ENCODE measurements at regions of chr1 and their contacts with region 1.

Region 1: DNA sequence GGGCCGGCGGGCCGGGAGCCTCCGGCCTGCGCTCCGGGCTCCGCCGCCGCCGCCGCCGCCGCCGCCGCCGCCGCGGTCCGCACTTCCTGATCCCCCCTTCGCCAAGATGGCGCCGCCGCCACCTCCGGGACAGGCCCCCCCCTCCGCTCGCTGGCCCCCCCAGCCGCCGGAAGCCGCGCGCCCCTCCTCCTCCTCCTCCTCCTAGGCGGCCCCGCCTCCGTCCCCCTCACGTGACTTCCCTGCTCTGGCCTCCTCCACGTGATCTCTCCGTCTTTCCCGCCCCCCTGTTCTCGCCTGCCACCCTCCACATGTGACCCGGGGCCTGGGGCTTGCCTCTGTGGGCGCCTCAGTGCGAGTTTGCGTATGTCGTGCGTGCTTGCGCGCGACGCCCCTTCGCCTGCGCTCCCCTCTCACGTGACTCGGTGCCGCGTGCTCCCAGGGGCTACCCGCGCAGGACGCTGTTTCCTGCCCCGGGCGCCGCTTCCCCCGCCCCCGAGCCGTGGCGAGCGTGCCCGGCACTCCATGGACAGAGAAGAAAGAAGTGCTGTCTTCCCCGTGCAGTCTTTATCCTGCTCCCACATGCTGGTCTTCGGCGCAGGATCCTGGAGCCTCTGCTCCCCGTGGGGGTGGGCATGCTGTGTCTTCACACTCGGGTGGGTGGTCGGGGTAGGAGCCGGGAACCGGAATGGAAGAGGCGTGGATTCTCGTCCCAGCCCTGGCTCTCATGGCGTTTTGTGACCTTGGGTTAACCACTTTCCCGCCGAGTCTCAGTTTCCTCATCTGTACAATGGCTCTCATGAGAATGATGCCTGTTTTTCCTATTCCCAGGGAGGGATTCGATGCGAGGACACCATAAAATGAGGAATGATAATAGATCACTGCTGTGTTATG is at the start of gene UBE2Q1:
- DNase-seq: peak; percentile 99
- H3K4me3 Mint-ChIP-seq: peak within 1 kb of the TSS; percentile 76
- H3K27ac Mint-ChIP-seq: peak within 1 kb of the TSS; percentile 65
- H3K4me1 Mint-ChIP-seq: peaks cover 18% of the 10 kb centered on the region
- H3K27me3 Mint-ChIP-seq: no peaks in the 10 kb centered on the region
- CTCF ChIP-seq: no peak
- total RNA-seq, gene UBE2Q1: 103 and 111 TPM in 2 replicates

Region 2: DNA sequence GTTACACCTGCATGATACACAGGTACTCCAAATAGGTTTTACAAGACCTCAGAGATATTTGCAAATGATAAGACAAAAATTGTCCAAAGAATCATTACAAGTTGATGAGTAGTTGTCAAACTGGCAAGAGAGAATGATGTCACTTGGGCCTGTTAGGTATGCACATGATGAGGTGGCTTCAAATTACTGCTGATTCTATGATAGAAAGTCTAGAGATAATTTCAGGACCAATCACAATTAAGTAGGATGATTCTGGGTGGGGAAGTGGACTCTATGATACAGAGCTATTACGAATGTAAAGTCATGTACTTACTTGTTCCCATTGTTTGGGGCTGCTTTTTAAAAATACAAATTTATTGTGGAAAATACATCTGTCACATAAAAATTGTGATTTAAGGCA is 1533.0 kb before region 1 on chr1:
- CTCF ChIA-PET with region 1: no interaction called
- POLR2A ChIA-PET with region 1: no interaction called
- intact Hi-C with region 1: no loop called
- DNase-seq: no peak
- H3K4me3 Mint-ChIP-seq: no peak overlapping the region
- H3K27ac Mint-ChIP-seq: no peak overlapping the region
- H3K4me1 Mint-ChIP-seq: no peaks in the 10 kb centered on the region
- H3K27me3 Mint-ChIP-seq: no peaks in the 10 kb centered on the region
- CTCF ChIP-seq: no peak

Region 3: DNA sequence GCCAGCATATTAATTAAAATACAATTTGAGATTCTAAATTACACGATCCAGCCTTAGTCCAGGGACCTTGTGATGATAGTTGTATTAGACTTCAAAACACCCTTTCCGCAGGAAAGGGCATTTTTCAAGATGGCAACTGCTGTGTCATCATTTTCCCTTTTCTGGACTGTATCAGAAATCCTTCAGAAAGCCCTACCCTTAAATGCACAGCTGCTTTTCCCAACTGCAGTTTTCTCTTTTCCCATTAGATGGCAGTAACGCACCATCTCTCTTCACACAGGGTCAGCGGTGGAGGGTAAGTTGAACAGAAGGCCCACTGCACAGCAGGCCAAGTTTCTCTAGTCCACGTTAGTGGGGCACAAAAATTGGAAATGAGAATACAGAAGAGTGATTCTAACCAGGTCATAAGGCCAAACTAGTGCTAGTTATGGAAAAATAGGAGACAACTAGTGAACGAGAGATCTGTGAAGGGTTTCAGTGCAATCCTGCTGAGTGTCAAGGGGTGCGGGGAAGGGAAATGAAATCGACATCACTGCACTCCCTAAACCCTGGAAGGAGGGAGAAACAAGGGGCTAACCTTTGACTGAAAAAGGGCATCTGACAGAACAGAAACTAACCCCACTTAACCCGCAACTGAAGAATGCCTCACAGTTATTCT is 78.9 kb before region 1 on chr1:
- CTCF ChIA-PET with region 1: interaction called, 128 read pairs
- POLR2A ChIA-PET with region 1: interaction called, 4 read pairs
- intact Hi-C with region 1: no loop called
- DNase-seq: peak; percentile 92
- H3K4me3 Mint-ChIP-seq: no peak overlapping the region
- H3K27ac Mint-ChIP-seq: no peak overlapping the region
- H3K4me1 Mint-ChIP-seq: peaks cover 23% of the 10 kb centered on the region
- H3K27me3 Mint-ChIP-seq: no peaks in the 10 kb centered on the region
- CTCF ChIP-seq: peak; percentile 98

Region 4: DNA sequence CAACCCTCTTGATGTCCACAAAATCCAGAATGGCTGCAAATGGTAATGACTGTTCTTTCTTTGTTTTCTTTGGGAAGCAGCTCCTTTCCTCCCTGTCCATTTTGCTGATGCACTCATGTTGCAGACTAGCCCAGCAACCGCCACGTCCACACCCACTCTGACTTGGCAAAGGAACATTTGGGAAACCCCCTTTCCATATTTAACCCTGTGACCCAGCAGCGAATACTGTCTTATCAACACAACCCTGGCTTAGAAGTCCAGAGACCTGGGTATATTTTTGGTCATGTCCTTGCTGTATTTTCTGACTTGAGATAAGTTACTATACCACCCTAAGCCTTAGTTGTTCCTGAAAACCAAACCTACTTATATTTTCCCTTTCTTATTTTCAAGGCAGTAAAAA is 38.5 kb before region 1 on chr1:
- CTCF ChIA-PET with region 1: no interaction called
- POLR2A ChIA-PET with region 1: no interaction called
- intact Hi-C with region 1: no loop called
- DNase-seq: peak; percentile 25
- H3K4me3 Mint-ChIP-seq: no peak overlapping the region
- H3K27ac Mint-ChIP-seq: no peak overlapping the region
- H3K4me1 Mint-ChIP-seq: peaks cover 15% of the 10 kb centered on the region
- H3K27me3 Mint-ChIP-seq: peaks cover 45% of the 10 kb centered on the region
- CTCF ChIP-seq: no peak

Region 5: DNA sequence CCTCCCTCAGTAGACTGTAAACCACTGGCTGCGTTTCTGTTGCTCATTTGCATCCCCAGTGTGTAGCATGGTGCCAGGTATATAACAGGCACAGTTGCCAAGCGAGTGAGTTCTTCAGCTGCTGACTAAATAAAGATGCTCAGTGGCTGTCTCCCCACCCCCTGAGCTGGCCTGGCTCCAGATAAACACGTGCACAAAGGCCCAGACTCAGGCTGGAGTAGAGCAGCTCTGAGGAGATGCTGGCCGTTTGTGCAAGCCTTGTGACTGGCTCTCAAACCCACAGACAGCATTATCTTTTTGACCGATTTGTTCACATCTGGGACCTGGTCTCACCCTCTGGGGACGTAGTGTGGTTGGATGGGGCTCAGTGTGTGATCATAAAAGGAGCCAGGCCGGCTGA is 15.9 kb after region 1 on chr1:
- CTCF ChIA-PET with region 1: interaction called, 13 read pairs
- POLR2A ChIA-PET with region 1: interaction called, 8 read pairs
- intact Hi-C with region 1: no loop called
- DNase-seq: peak; percentile 56
- H3K4me3 Mint-ChIP-seq: no peak overlapping the region
- H3K27ac Mint-ChIP-seq: no peak overlapping the region
- H3K4me1 Mint-ChIP-seq: peaks cover 8% of the 10 kb centered on the region
- H3K27me3 Mint-ChIP-seq: peaks cover 29% of the 10 kb centered on the region
- CTCF ChIP-seq: no peak

Region 6: GRCh38 chr1:154627257-154628120 is 68.7 kb after region 1 on chr1:
- CTCF ChIA-PET with region 1: interaction called, 7 read pairs
- POLR2A ChIA-PET with region 1: interaction called, 13 read pairs
- intact Hi-C with region 1: loop called (anchors 1 kb)
- DNase-seq: peak; percentile 93
- H3K4me3 Mint-ChIP-seq: peak overlapping the region; percentile 84
- H3K27ac Mint-ChIP-seq: peak overlapping the region; percentile 99
- H3K4me1 Mint-ChIP-seq: peaks cover 29% of the 10 kb centered on the region
- H3K27me3 Mint-ChIP-seq: peaks cover 26% of the 10 kb centered on the region
- CTCF ChIP-seq: no peak

Region 7: GRCh38 chr1:154747740-154748404 is 189.1 kb after region 1 on chr1:
- CTCF ChIA-PET with region 1: no interaction called
- POLR2A ChIA-PET with region 1: no interaction called
- intact Hi-C with region 1: loop called (anchors 2 kb)
- DNase-seq: no peak
- H3K4me3 Mint-ChIP-seq: no peak overlapping the region
- H3K27ac Mint-ChIP-seq: no peak overlapping the region
- H3K4me1 Mint-ChIP-seq: no peaks in the 10 kb centered on the region
- H3K27me3 Mint-ChIP-seq: peaks cover 80% of the 10 kb centered on the region
- CTCF ChIP-seq: no peak

Region 8: DNA sequence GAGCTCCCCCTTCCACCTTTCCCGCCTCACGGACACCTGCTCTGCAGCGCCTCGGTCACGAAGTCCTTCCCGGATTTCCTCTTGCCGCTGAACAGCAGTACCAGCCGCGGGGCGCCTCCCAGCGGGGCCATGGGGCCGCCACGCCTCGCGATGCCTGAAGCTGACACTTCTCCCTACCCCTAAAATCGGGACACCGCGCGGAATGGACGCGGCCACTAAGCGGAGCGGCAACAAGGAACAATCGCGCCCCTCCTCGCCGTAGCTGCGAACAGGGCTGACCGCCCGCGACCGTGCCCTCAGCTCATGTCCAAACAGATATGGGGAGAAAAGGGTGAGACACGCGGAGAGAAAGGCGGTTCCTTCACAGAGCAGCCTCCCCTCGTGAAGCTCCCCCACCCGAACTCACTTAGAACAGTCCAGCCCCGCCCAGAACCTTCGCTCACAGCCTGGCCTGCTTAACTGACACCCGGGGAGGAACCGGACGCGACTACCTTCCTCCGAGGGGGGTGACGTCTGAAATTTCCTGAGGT is 377.8 kb after region 1 on chr1 and contains the start of gene PMVK:
- CTCF ChIA-PET with region 1: interaction called, 11 read pairs
- POLR2A ChIA-PET with region 1: interaction called, 24 read pairs
- intact Hi-C with region 1: loop called (anchors 1 kb)
- DNase-seq: peak; percentile 99
- H3K4me3 Mint-ChIP-seq: peak within 1 kb of the TSS; percentile 90
- H3K27ac Mint-ChIP-seq: peak within 1 kb of the TSS; percentile 100
- H3K4me1 Mint-ChIP-seq: peaks cover 49% of the 10 kb centered on the region
- H3K27me3 Mint-ChIP-seq: no peaks in the 10 kb centered on the region
- CTCF ChIP-seq: peak; percentile 26
- total RNA-seq, gene PMVK: 57.7 and 68.9 TPM in 2 replicates

Region 9: DNA sequence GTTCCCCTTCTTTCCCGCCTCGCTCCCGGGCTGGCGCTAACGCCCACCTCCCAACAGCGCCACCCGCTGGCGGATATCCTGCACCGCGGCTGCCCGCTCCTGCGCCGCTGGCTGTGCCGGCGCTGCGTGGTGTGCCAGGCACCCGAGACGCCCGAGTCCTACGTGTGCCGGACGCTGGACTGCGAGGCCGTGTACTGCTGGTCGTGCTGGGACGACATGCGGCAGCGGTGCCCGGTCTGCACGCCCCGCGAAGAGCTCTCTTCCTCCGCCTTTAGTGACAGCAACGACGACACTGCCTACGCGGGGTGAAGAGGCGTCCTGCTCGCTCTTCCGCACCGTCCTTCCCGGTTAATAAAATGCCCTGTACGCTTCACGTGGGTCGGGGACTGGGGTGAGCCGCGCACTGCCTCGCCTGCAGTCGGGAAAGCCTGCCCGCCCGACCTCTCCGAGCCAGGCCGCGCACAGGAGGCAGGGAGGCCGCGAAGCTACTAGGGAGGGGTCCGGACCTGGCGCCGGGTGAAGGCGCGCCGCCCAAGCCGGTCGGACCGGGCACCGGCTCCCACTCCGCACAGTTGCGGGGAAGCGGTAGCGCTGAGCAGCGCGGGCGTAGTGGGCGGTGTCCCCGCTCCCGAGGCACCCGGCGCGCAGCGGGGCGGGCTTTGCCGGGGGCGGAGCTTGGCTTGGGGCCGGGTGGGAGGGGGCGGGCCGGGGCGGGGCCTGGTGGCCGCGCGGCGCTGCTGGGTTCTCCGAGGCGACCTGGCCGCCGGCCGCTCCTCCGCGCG is 491.9 kb after region 1 on chr1 and contains the start of gene ADAM15:
- CTCF ChIA-PET with region 1: interaction called, 5 read pairs
- POLR2A ChIA-PET with region 1: no interaction called
- intact Hi-C with region 1: loop called (anchors 5 kb)
- DNase-seq: peak; percentile 84
- H3K4me3 Mint-ChIP-seq: peak within 1 kb of the TSS; percentile 90
- H3K27ac Mint-ChIP-seq: peak within 1 kb of the TSS; percentile 80
- H3K4me1 Mint-ChIP-seq: peaks cover 33% of the 10 kb centered on the region
- H3K27me3 Mint-ChIP-seq: no peaks in the 10 kb centered on the region
- CTCF ChIP-seq: peak; percentile 99
- total RNA-seq, gene ADAM15: 385 and 456 TPM in 2 replicates